Prostate gland (tissue), 2 donors: ENCODE measurements at regions of chr2 and their contacts with region 1.

Region 1: DNA sequence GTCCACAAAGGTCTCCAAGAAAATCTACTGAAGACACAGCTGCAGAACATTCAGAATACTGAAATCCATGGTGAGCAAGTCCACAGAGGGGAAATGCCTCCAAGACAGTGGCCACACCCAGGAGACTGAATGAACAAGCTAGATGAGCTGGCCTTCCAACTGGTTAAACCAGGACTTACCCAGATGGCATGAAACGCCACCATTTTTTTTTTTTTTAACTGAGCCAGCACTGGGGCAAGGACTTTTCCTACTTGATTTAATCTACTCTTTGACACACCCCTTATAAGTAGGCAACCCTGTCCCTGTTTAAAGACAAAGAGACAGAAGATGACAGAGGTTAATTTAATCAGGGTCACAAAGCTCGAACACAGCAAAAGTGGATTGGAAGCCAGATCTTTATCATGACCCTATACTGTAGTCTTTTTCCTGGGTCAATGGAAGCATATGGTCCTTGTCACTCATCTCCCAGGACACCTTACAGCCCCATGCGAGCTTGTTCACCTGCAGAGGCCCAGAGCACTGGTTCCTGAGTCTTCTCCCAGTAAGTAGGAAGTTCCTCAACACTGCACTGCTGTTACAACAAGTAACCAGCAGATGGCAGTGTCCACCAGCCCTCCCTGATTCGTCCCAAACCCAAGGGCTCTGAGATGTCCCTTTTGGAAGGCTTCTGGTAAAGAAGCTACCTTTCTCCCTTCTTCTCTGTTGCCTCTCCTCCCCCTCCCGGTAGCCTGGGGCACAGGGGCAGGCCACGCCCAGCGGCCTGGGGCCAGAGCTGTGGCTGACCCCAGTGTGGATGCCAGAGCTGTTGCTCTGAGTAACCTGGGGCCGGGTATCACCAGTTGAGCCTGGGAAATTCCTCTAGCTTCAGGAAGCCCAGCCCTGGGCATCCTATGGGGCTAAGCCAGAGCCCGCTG is 5.6 kb upstream of the GDF7 start:
- DNase-seq: peak; percentile 47
- H3K4me3 ChIP-seq: no peak overlapping the region
- H3K27ac ChIP-seq: no peak overlapping the region
- H3K4me1 ChIP-seq: peaks cover 4% of the 10 kb centered on the region
- H3K27me3 ChIP-seq: peaks cover 2% of the 10 kb centered on the region
- CTCF ChIP-seq: peak; percentile 94 to 98 (median 96)
- POLR2A ChIP-seq: no peak

Region 2: GRCh38 chr2:20507166-20507692 is 154.1 kb before region 1 on chr2:
- intact Hi-C with region 1: no loop called
- DNase-seq: no peak
- H3K4me3 ChIP-seq: no peak overlapping the region
- H3K27ac ChIP-seq: no peak overlapping the region
- H3K4me1 ChIP-seq: no peaks in the 10 kb centered on the region
- H3K27me3 ChIP-seq: no peaks in the 10 kb centered on the region
- CTCF ChIP-seq: no peak
- POLR2A ChIP-seq: no peak

Region 3: GRCh38 chr2:20844246-20844645 is 182.9 kb after region 1 on chr2:
- intact Hi-C with region 1: no loop called
- DNase-seq: no peak
- H3K4me3 ChIP-seq: no peak overlapping the region
- H3K27ac ChIP-seq: no peak overlapping the region
- H3K4me1 ChIP-seq: no peaks in the 10 kb centered on the region
- H3K27me3 ChIP-seq: no peaks in the 10 kb centered on the region
- CTCF ChIP-seq: no peak
- POLR2A ChIP-seq: no peak

Region 4: DNA sequence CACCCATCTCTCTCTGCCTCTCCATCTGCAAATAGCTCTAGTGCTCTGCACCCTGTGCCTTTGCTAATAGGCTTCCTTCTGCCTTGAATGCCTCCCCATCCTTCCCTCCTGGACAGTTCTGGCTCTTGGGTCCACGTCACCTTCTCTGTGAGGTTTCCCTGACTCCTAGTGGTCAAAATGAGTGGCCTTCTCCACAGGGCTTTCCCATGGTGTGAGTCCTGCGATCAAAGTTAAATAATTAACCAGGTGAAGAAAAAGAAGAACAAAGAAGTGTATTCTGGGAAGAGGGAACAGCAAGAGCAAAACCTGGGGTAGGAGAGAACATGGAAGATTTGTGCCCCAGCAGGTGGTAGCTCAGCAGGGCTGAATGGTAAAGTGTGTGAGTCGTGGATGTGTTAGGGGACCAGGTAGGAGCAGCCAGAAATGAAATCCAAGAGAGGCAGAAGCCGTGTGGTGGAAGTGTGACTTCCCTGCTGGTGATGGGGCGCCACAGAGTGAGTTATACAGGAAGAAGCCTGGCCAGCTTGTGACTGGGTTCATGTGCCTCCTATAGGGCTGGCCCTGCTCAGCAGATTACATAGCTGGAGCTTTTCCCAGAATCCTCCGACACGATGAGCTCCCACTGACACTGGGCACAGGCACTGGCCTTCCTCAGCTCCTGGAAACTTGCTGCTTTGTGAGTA is 255.4 kb after region 1 on chr2:
- intact Hi-C with region 1: loop called (anchors 5 kb)
- DNase-seq: peak; percentile 31
- H3K4me3 ChIP-seq: no peak overlapping the region
- H3K27ac ChIP-seq: peak overlapping the region; percentile 26 to 60
- H3K4me1 ChIP-seq: peaks cover 9% of the 10 kb centered on the region
- H3K27me3 ChIP-seq: no peaks in the 10 kb centered on the region
- CTCF ChIP-seq: peak in 3 of 4 experiments; percentile 35 to 48 (median 46)
- POLR2A ChIP-seq: no peak

Region 5: GRCh38 chr2:20930928-20931327 is 269.6 kb after region 1 on chr2:
- intact Hi-C with region 1: no loop called
- DNase-seq: peak; percentile 22
- H3K4me3 ChIP-seq: no peak overlapping the region
- H3K27ac ChIP-seq: no peak overlapping the region
- H3K4me1 ChIP-seq: no peaks in the 10 kb centered on the region
- H3K27me3 ChIP-seq: no peaks in the 10 kb centered on the region
- CTCF ChIP-seq: no peak
- POLR2A ChIP-seq: no peak

Region 6: GRCh38 chr2:20962939-20963557 is 301.7 kb after region 1 on chr2:
- intact Hi-C with region 1: loop called (anchors 2 kb)
- DNase-seq: peak; percentile 68
- H3K4me3 ChIP-seq: no peak overlapping the region
- H3K27ac ChIP-seq: no peak overlapping the region
- H3K4me1 ChIP-seq: no peaks in the 10 kb centered on the region
- H3K27me3 ChIP-seq: no peaks in the 10 kb centered on the region
- CTCF ChIP-seq: peak; percentile 81 to 93 (median 88)
- POLR2A ChIP-seq: no peak

Region 7: DNA sequence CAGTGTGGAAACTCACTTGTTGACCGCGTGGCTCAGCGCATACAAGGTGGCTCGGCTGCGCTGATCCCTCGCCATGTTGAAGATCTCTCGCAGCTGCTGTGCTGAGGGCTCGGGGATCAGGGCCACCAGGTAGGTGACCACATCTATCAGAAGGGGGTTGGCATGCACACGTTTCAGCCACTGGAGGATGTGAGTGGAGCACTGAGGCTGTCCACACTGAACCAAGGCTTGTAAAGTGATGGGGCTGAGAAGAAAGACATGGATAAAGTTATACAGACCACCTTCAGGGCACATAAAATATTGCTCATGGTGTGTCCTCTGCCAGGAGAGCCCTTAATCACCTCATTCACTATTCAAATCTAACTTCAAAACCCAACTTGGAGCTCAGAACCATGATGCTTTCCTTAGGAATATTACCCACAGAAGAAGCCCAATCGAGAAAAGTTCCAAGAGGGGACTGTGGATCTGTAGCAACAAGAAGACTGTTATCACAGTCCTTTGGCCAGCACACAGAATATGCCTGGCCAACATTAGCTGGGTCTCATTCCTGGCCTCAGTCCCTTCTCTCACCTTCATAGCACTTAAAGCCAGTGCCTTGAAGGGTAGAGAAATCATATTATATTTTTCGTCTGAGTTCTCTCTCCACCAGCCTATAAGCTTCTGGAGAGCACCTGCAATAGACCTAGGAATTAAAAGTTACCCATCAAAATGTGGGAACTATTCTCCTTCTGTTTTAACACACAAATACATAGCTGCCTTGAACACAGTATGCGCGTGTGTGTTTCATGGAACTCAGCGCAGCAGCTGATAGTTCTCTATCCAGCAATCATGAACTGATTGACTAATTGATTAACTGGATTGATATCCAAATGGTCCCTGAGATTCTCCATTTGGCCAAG is 371.3 kb after region 1 on chr2:
- intact Hi-C with region 1: no loop called
- DNase-seq: no peak
- H3K4me3 ChIP-seq: no peak overlapping the region
- H3K27ac ChIP-seq: no peak overlapping the region
- H3K4me1 ChIP-seq: no peaks in the 10 kb centered on the region
- H3K27me3 ChIP-seq: no peaks in the 10 kb centered on the region
- CTCF ChIP-seq: no peak
- POLR2A ChIP-seq: no peak

Region 8: GRCh38 chr2:21118302-21118920 is 457.1 kb after region 1 on chr2:
- intact Hi-C with region 1: loop called (anchors 5 kb)
- DNase-seq: no peak
- H3K4me3 ChIP-seq: no peak overlapping the region
- H3K27ac ChIP-seq: no peak overlapping the region
- H3K4me1 ChIP-seq: no peaks in the 10 kb centered on the region
- H3K27me3 ChIP-seq: no peaks in the 10 kb centered on the region
- CTCF ChIP-seq: peak in 3 of 4 experiments; percentile 42 to 66 (median 55)
- POLR2A ChIP-seq: no peak